MCF 10A (cell line): ENCODE measurements at regions of chr1 and their contacts with region 1.

Region 1: DNA sequence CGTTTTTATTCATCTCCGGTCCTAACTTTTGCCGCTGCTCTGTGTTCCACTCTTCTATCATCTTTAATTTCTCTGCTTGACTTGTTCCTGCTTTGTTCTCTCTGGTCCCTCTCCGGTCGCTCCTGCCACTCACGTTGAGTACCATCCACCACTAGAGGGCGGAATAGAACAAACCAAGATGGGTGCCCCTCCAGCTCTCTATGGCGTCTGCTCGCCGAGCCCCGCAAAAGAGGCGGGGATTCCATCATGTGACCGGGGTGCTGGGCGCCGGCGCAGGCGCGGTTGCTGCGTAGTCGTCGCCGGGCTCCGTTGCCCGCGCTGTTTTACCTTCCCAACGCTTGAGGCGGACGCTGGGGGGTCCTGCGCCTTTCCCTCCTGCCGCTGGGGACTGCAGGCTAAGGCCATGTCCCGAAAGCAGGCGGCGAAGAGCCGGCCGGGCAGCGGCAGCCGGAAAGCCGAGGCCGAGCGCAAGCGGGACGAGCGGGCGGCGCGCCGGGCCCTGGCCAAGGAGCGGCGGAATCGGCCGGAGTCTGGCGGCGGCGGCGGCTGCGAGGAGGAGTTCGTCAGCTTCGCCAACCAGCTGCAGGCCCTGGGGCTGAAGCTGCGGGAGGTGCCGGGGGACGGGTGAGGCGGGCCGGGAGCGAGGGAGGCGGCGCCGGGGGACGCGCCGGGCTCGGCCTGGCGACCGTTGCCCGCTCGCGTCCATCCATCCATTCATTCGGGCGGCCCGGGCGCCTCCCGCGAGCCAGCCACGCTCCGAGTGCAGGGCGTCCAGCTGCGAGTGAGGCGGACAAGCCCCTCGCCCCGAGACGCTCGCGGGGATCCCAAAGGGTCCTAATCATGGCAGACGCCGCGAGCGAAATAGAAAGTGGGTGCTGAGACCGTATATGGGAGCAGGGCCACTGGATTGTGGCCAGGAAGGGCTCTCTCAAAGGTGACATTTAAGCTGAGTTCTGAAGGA is at the start of gene OTUD3:
- DNase-seq: peak; percentile 98
- H3K4me3 Mint-ChIP-seq: peak within 1 kb of the TSS; percentile 76
- H3K27ac Mint-ChIP-seq: peak within 1 kb of the TSS; percentile 74
- H3K4me1 Mint-ChIP-seq: peaks cover 29% of the 10 kb centered on the region
- H3K27me3 Mint-ChIP-seq: no peaks in the 10 kb centered on the region
- CTCF ChIP-seq: peak; percentile 60
- total RNA-seq, gene OTUD3: 11.6 and 12.0 TPM in 2 replicates

Region 2: DNA sequence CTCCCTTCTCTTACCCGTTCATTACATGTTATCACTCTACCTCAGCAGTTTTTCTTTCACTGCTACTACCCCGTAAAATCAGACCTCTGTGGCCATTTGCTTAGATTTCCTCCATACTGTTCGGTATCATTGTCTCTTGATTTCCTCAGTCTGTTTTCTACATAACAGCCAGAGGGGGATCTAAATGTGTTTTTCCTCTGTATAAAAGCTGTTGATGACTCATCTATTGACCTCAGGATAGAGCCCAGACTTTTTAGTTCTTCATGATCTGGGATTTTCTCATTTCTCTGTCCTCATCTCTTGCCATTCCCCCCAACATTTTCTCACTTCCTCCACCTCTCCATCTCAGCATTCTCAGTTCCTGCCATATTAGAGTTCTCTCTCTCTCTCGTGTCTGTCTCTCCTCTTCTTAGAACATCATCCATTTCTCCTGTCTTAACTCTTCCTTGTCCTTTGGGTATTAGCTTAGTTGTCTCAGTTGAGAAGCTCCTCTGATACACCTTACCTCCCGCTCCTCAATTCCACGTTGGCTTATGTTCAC is 10.3 kb after region 1 on chr1:
- CTCF ChIA-PET with region 1: interaction called, 12 read pairs
- POLR2A ChIA-PET with region 1: interaction called, 13 read pairs
- intact Hi-C with region 1: no loop called
- DNase-seq: no peak
- H3K4me3 Mint-ChIP-seq: no peak overlapping the region
- H3K27ac Mint-ChIP-seq: peak overlapping the region; percentile 62
- H3K4me1 Mint-ChIP-seq: peaks cover 18% of the 10 kb centered on the region
- H3K27me3 Mint-ChIP-seq: no peaks in the 10 kb centered on the region
- CTCF ChIP-seq: no peak

Region 3: GRCh38 chr1:19903600-19903999 is 21.2 kb after region 1 on chr1:
- CTCF ChIA-PET with region 1: interaction called, 11 read pairs
- POLR2A ChIA-PET with region 1: interaction called, 15 read pairs
- intact Hi-C with region 1: no loop called
- DNase-seq: peak; percentile 76
- H3K4me3 Mint-ChIP-seq: no peak overlapping the region
- H3K27ac Mint-ChIP-seq: peak overlapping the region; percentile 81
- H3K4me1 Mint-ChIP-seq: peaks cover 10% of the 10 kb centered on the region
- H3K27me3 Mint-ChIP-seq: no peaks in the 10 kb centered on the region
- CTCF ChIP-seq: no peak

Region 4: DNA sequence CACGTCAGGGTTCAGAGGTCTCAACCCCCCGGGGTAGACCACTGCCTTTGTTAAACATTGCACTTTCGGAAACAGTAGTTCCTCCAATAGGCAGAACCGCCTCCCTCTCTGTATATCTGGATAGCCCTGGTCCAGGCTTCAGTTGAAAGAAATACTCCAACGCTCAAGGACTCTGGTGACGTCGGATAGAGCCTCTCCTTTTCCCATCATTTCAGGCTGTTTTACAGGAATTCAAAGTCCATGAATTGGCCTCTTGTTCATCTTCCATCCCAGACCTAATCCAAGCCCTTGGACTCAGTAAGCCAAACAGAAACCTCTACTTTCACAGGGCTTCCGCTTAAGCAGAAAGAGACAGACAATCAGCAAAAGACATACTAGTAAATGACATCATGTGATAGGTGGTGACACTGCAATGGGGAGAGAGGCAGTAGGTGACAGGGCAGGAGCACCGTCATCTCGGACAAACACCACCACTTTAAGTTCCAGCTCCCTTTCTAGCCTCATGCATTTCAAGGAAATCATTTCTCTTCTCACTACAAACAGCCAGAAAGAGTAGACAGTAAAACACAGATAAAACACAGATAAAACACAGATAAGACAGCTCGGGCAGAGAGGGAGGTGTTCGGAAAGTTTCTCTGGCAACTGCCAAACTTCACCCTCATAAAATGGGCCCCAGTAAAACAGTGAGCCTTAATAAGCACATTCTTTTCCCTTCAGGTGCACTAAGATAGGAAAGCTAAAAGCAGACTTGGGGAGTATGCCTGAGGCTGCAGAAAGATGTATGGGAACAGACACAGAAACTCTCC is 99.3 kb after region 1 on chr1:
- CTCF ChIA-PET with region 1: no interaction called
- POLR2A ChIA-PET with region 1: no interaction called
- intact Hi-C with region 1: no loop called
- DNase-seq: no peak
- H3K4me3 Mint-ChIP-seq: no peak overlapping the region
- H3K27ac Mint-ChIP-seq: no peak overlapping the region
- H3K4me1 Mint-ChIP-seq: no peaks in the 10 kb centered on the region
- H3K27me3 Mint-ChIP-seq: peaks cover 48% of the 10 kb centered on the region
- CTCF ChIP-seq: no peak